OCI-LY7 (cell line): ENCODE measurements at regions of chr4 and their contacts with region 1.

Region 1: DNA sequence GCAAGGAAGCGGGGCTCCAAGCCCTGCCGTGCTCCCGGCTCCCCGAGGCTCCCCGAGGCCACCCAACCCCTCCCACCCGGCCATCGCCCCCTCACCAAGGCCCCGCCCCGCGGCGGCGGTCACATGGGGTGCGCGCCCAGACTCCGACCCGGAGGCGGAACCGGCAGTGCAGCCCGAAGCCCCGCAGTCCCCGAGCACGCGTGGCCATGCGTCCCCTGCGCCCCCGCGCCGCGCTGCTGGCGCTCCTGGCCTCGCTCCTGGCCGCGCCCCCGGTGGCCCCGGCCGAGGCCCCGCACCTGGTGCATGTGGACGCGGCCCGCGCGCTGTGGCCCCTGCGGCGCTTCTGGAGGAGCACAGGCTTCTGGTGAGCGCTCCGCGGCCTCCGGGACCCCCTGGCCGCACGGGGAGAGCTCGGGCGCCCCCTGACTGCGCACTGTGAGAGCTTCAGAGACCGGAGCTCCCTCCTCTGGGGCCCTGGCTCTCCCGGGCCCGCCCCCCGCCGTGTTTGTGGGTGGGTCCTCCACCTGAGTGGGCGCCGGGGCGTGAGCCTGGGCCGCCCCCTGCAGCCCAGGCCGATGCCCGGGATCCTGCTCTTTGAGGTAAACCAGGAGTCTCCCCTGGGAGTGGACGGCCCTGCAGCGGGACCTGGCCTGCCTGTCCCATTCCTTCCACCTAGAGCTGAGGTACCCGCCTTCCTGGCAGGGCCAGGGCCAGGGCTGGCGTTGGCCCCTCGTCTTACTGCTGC is at the start of gene IDUA:
- DNase-seq: peak; percentile 90
- H3K4me3 ChIP-seq: peak within 1 kb of the TSS; percentile 67
- H3K27ac ChIP-seq: no peak within 1 kb of the TSS
- H3K4me1 ChIP-seq: no peaks in the 10 kb centered on the region
- CTCF ChIP-seq: peak; percentile 85
- total RNA-seq, gene IDUA: 9.3 and 15.7 TPM in 2 replicates

Region 2: DNA sequence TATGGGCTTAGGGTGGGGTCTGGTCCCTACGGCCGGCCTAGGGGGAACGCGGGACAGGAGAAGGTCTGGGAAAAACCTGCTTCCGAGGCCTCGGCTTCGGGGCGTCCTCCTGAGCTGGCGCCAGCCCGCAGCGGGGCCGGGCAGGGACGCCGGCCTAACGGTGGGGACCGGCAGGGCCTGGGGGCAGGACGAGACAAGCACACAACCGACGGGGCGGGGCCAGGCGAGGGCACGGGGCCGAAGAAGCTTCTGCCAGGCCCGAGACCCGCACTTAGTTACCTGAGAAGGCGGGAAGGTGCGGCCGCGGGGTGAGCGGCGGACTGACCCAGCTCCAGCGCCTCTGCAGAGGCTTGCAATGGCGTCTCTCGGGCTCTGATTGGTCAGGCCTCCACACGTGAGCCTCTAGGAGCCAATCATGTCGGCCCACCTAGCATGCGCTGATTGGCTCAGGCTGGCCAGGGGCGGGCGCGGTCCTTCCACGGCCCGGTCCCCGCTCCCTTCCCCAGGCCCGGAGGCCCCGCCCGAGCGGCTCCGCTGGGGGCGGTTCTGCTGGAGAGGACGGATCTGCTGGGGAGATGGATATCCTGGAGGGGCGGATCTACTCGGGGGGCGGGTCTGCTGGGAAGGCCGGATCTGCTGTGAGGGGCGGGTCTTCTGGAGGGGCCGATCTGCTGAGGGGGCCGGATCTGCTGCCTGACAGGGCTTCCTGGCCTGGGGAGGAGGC is 205.4 kb before region 1 on chr4:
- CTCF ChIA-PET with region 1: no interaction called
- POLR2A ChIA-PET with region 1: no interaction called
- intact Hi-C with region 1: loop called (anchors 1 kb)
- DNase-seq: peak; percentile 98
- H3K4me3 ChIP-seq: peak overlapping the region; percentile 97
- H3K27ac ChIP-seq: peak overlapping the region; percentile 66
- H3K4me1 ChIP-seq: peaks cover 38% of the 10 kb centered on the region
- CTCF ChIP-seq: no peak

Region 3: DNA sequence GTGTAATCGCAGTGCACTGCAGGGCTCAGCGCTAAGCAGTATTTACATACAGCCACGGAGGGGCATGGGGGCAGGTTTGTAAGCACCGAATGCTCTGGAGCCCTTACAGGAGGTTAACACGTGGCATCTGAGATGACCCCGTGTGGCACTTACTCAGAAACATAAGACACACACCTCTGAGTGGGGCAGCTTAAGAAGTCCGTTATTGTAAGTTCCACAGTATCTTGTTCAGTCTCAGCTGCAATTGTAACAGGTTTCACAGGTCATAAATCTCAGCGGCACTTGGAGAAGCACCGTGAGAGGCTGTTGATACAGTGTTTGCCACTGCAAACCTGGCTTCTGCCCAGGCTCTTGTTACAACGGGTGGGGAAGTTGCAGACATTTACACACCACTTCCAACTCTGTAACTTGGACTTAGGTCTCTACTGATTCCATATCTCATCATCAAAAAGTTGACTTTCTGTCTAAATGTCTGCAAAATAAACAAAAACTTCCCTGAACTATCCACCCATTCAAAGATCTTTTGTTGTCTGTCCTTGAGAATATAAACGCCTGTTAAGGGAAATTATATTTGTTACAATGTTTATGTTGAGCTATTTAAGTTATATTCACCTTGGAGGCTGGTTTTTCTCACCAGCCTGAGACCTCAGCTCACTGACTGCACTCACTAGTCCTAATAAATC is 171.4 kb before region 1 on chr4:
- CTCF ChIA-PET with region 1: no interaction called
- POLR2A ChIA-PET with region 1: no interaction called
- intact Hi-C with region 1: no loop called
- DNase-seq: peak; percentile 11
- H3K4me3 ChIP-seq: no peak overlapping the region
- H3K27ac ChIP-seq: no peak overlapping the region
- H3K4me1 ChIP-seq: peaks cover 7% of the 10 kb centered on the region
- CTCF ChIP-seq: no peak

Region 4: GRCh38 chr4:891747-892146 is 95.3 kb before region 1 on chr4:
- CTCF ChIA-PET with region 1: no interaction called
- POLR2A ChIA-PET with region 1: no interaction called
- intact Hi-C with region 1: loop called (anchors 5 kb)
- DNase-seq: peak; percentile 38
- H3K4me3 ChIP-seq: no peak overlapping the region
- H3K27ac ChIP-seq: no peak overlapping the region
- H3K4me1 ChIP-seq: no peaks in the 10 kb centered on the region
- CTCF ChIP-seq: peak; percentile 65

Region 5: DNA sequence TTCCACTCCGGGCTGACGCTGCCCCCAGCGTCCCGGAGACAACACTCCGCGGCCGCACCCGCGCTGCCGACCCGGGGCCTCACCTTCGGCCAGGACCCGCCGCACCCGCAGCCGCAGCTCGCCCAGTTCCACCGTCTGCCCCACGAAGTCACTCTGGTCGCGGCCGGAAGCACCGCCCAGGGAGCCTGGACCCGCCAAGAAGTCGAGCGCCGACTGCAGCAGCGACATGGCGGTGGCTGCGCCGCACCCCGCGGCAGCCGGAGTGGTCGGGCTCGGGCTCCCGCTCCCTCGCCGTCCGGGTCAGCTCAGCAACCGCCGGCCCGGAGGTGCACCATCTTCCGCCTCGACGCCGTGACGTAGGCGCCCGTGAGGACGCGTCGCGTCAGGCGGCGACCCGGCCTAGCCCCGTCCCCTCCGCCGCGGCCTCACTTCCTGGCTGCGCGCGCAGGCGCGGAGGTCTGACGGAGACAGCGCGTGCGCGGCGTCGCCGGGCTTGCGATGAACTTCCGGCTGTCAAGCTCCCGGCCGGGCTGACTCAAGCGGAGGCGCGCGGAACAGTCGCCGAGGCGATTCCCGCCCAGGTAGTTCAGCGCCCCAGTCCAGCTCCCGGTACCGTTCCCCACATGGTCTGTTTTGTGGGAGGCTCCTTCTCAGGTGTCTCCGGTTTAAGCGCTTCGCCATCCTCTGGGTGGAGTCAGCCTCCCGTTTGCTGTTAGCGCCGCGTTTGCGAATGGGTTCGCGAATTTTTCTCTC is 54.9 kb before region 1 on chr4 and contains the starts of genes GAK and TMEM175:
- CTCF ChIA-PET with region 1: no interaction called
- POLR2A ChIA-PET with region 1: no interaction called
- intact Hi-C with region 1: loop called (anchors 2 kb)
- DNase-seq: peak; percentile 97
- H3K4me3 ChIP-seq: peak within 1 kb of the TSS; percentile 93
- H3K27ac ChIP-seq: peak within 1 kb of the TSS; percentile 36
- H3K4me1 ChIP-seq: peaks cover 48% of the 10 kb centered on the region
- CTCF ChIP-seq: no peak
- total RNA-seq, gene GAK: 77.5 and 86.1 TPM in 2 replicates
- total RNA-seq, gene TMEM175: 7.1 and 12.5 TPM in 2 replicates

Region 6: DNA sequence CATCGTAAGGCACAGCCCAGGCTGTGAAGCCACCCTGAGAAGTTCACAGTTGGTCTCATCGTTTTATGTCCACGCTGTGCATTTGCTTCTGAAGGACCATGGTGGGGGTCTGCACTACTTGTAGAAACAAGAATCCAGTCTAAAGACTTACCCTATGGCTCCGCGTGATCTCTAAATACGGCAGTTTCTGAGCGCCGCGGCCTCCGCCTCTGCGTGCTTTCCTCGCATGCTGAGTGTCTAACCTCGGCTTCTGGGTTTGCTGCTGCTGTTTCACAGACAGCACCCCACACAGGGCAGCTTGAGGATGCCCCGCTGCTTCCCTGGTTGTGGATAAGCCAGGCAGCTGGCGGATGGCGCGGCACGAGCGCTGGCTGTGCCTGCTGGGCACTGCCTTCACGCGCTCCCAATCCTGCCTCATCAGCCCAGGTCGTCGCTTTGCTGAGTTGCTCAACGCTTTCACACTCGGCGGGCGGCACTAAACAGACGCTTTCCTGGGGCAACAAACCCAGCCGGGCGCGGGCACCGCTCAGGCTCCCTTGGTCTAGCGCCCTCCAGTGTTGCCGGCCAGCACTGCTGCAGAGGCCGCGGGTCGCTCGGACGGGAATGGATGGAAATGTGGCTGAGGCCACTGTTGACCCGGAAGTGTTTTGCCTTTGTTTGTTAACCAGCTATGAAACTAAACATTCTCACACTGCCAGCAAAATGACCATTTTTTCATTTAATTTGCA is 63.6 kb after region 1 on chr4:
- CTCF ChIA-PET with region 1: no interaction called
- POLR2A ChIA-PET with region 1: no interaction called
- intact Hi-C with region 1: no loop called
- DNase-seq: no peak
- H3K4me3 ChIP-seq: no peak overlapping the region
- H3K27ac ChIP-seq: no peak overlapping the region
- H3K4me1 ChIP-seq: peaks cover 5% of the 10 kb centered on the region
- CTCF ChIP-seq: 0 out of 2 replicates have a peak, but pooled peaks have one; percentile 29